Posterior vena cava (tissue), 2 donors: ENCODE measurements at regions of chr1 and their contacts with region 1.

Region 1: DNA sequence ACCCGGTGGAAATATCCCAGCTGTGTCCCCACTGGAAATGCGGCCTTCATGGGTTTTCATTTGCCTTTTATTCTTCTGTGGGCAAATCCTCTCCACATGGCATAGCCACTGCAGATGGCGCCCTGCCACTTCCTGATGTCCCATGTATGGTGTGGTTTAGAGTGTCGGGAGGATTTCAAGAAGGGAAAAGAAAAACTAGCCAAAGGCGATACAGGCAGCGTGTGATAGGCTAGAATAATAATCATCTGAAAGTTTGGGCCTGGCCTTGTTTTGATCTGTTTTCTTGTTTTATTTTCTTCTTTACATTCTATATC is 123.6 kb downstream of the PEX14 start:
- DNase-seq: no peak

Region 2: GRCh38 chr1:10424034-10424433 is 174.3 kb before region 1 on chr1:
- intact Hi-C with region 1: no loop called
- DNase-seq: peak; percentile 88

Region 3: DNA sequence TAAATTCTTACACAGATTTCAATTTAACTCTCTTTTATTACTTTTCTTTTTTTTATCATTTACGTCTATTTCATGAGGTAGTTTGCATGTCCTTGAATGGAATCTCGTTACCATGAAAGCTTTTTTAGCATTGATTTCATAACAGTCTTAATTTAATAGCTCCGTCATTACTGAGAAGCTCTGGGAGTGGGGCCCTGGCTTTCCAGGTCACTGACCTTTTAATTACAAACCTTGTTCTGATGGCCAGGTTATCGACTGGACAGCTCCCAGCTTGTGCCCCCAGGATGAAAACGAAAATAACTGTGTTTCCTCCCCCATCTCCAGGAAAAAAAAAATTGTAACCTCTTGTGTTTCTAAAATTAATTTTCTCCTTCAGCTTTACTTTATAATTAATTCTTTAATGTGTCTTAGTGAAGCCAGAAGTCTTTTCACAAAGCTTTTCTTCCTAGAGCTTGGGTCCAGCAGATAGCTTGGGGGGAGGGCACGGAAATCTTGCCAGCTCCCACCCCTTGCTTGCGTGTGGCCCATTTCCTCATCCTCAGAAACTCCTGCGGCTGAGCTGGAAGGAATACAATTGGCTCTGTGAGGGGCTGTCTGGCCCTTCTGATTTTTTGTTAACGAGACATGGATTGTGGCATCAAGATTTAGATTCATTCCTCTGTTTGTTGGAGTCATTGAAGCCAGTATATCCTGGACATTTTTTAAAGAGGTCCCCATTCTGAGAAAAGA is 57.9 kb before region 1 on chr1:
- intact Hi-C with region 1: loop called in 1 of 2 experiments (anchors 10 kb)
- DNase-seq: no peak